ENCODE measurements at regions of chr7 and their contacts with region 1.

Region 1: DNA sequence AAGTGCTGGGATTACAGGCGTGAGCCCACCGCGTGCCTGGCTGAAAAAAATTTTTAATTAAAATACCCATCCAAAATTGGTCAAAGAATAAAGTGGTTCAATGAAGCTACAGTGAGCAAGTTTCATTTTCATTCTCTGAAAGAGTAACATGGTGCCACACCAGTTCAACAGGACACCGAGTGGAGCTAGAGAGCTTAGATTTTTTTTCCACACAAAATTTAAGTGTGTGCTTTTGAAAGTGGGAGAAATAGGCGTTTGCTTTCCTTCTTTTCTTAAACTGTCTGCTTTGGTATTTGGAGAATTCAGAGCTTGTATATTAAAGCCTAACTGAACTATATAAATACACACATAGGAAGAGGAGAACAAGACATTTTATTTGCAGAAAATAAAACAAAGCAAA is 43.4 kb downstream of the BPGM start:
- DNase-seq: peak; percentile 53
- H3K4me3 ChIP-seq: no peak overlapping the region
- H3K27ac ChIP-seq: no peak overlapping the region
- H3K27me3 ChIP-seq: no peaks in the 10 kb centered on the region
- CTCF ChIP-seq: peak; percentile 76

Region 2: DNA sequence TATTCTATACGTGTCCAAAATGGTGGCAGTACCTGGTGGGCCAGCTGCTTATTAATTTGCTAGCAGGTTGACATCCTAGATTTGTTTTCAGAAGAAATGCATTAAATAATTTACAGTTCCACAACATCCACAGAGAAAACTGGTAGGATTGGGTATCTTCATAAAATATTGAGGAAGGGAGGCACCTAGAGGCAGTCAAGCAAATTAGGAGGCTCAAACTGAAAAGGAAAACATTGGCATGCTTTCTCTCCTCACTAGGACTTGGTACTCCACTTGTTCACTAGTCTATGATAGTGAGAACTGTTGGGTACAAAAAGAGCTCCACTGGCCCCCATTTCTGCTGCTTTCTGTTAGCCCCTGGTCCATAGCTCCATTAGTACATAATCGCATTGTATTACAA is 581.2 kb before region 1 on chr7:
- CTCF ChIA-PET with region 1: no interaction called
- POLR2A ChIA-PET with region 1: no interaction called
- DNase-seq: no peak
- H3K4me3 ChIP-seq: no peak overlapping the region
- H3K27ac ChIP-seq: no peak overlapping the region
- H3K27me3 ChIP-seq: no peaks in the 10 kb centered on the region
- CTCF ChIP-seq: no peak

Region 3: GRCh38 chr7:134676743-134677142 is 13.3 kb before region 1 on chr7:
- CTCF ChIA-PET with region 1: interaction called, 17 read pairs
- POLR2A ChIA-PET with region 1: no interaction called
- DNase-seq: no peak
- H3K4me3 ChIP-seq: no peak overlapping the region
- H3K27ac ChIP-seq: no peak overlapping the region
- H3K27me3 ChIP-seq: no peaks in the 10 kb centered on the region
- CTCF ChIP-seq: no peak

Region 4: GRCh38 chr7:134750083-134751062 is 60.4 kb after region 1 on chr7:
- CTCF ChIA-PET with region 1: interaction called, 20 read pairs
- POLR2A ChIA-PET with region 1: interaction called, 4 read pairs
- DNase-seq: no peak
- H3K4me3 ChIP-seq: no peak overlapping the region
- H3K27ac ChIP-seq: no peak overlapping the region
- H3K27me3 ChIP-seq: no peaks in the 10 kb centered on the region
- CTCF ChIP-seq: peak; percentile 62

Region 5: DNA sequence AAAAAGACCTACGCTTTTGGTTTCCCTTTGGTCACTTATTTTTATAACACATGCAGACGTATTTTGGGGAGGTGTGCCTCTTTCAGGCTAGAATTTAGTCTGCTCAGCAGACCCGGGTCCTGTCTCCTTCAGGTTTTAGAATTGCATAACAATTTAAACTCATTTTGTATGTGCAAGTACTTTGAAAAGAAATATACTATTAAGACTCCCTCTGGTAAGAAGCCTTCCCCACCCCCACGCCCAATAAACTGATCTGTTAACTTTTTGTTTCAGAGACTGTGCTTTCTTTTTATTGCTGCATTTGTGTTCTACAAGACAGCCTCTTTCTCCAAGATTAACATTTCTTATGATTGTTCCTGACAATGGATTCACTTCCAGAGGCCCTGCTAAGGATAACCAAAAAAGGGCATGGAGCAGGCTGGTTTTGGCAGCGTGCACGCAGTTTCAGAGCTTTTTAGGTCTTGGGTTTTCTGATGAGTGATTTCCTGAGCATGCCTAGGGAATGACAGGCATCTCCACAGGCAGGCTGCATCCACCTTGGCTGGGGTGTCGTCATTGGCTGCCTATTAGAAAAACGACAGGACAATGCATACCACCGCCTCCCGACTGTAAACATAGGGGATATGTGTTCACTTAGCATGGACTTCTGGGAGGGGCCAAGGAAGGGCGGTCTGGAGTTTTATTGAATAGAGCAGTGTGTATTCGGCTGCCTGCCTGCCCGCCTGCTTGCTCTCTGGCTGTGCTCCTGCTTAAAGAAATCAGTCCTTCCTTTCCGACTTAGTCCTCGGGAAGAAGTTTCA is 89.1 kb after region 1 on chr7 and contains the start of gene CALD1:
- CTCF ChIA-PET with region 1: interaction called, 13 read pairs
- POLR2A ChIA-PET with region 1: interaction called, 41 read pairs
- DNase-seq: peak; percentile 99
- H3K4me3 ChIP-seq: peak within 1 kb of the TSS; percentile 71
- H3K27ac ChIP-seq: peak within 1 kb of the TSS; percentile 97
- H3K27me3 ChIP-seq: no peaks in the 10 kb centered on the region
- CTCF ChIP-seq: no peak
- polyA plus RNA-seq, gene CALD1: 578 and 804 TPM in 2 replicates

Region 6: GRCh38 chr7:134954197-134955082 is 264.4 kb after region 1 on chr7:
- CTCF ChIA-PET with region 1: interaction called, 42 read pairs
- POLR2A ChIA-PET with region 1: no interaction called
- DNase-seq: no peak
- H3K4me3 ChIP-seq: no peak overlapping the region
- H3K27ac ChIP-seq: no peak overlapping the region
- H3K27me3 ChIP-seq: no peaks in the 10 kb centered on the region
- CTCF ChIP-seq: peak; percentile 57